IMR-90 (cell line): ENCODE measurements at regions of chr9 and their contacts with region 1.

Region 1: DNA sequence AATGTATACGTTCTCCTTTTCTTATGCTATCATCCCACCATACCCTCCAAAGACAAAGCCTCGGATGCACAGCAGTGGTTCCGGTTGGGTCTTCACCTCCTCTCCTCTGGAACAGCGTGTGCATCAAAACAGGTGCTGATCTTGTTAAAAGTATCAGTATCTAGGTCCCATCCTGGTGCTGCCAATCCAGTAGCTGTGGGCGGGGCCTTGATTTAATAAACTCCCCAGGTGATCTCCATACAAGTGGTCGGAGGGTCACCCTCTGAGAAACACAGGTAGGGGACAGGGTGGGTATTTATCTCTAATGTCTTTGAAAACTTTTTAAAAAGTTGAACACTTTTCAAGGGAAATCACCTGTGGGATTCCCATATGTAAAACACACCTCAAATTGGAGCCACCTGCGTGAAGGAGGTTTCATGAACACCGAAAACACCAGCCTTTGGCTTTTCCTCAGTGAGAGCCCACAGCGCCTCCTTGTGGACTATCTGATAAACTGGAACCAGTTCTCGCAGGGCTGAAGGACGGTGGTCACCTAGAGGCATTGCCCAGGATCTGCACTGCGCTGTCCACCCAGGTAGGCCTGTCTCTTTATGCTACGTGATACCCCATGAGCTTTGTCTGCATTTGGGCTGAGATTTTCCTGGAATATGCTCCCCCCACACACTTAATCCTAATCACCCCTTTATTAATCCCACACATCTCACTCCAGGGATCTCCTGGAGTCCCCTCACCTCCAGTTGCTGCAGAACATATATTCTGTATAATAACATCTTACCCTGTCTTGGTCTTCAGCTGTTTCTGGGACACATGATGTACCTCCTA is 80.5 kb upstream of the EPB41L4B start:
- DNase-seq: peak; percentile 35
- ATAC-seq: peak; percentile 72
- H3K4me3 ChIP-seq: no peak overlapping the region
- H3K27ac ChIP-seq: no peak overlapping the region
- H3K4me1 ChIP-seq: no peaks in the 10 kb centered on the region
- H3K27me3 ChIP-seq: no peaks in the 10 kb centered on the region; the same call in 1 of the 2 replicates
- CTCF ChIP-seq: peak; percentile 58
- POLR2A ChIP-seq: no peak
- RAD21 ChIP-seq: peak; percentile 62

Region 2: GRCh38 chr9:109182940-109183798 is 218.2 kb before region 1 on chr9:
- CTCF ChIA-PET with region 1: no interaction called
- POLR2A ChIA-PET with region 1: no interaction called
- dilution Hi-C with region 1: no loop called
- in situ Hi-C with region 1: no loop called
- intact Hi-C with region 1: loop called (anchors 5 kb)
- DNase-seq: peak; percentile 15
- ATAC-seq: peak; percentile 61
- H3K4me3 ChIP-seq: no peak overlapping the region
- H3K27ac ChIP-seq: no peak overlapping the region
- H3K4me1 ChIP-seq: no peaks in the 10 kb centered on the region
- H3K27me3 ChIP-seq: peaks cover 16% of the 10 kb centered on the region
- CTCF ChIP-seq: peak; percentile 40
- POLR2A ChIP-seq: no peak
- RAD21 ChIP-seq: peak; percentile 31; the same call in 1 of the 2 replicates

Region 3: DNA sequence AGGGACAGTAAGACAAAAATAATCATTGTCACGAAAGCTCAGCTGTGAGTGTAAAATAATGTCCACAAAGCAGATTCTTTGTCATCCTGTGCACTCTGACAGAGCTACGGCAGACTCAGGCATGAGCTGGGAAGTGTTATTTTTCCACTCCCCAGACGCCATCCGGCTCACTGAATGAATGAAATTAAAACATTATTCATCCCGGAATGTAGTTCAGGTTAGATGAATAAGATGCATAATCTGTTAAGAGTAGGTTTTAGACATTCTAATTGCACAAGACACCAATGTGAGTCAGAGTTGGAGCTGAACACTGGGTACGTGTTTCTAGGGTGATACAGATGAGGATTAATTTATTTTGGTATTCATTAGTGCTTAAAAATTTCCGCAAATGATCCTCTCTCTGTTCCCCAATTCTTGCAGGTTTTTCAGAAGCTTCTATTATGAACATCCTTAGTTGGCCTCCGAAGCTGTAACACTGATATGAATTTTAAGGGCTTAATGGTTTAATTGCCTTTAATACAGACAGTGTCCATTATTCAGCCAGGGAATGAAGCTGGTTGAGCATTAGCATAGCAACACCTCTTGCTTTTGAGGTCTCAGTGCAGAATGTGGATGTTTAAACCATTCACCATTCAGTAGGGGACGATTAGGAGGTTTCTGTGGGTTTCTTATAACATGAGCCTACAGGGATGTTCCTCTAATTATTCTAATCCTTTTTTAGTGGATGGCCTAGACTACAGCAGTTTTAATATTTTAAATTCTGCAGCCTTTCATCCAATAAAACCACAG is 168.7 kb before region 1 on chr9:
- CTCF ChIA-PET with region 1: no interaction called
- POLR2A ChIA-PET with region 1: no interaction called
- dilution Hi-C with region 1: no loop called
- in situ Hi-C with region 1: no loop called
- intact Hi-C with region 1: no loop called
- DNase-seq: peak; percentile 61
- ATAC-seq: peak; percentile 83
- H3K4me3 ChIP-seq: no peak overlapping the region
- H3K27ac ChIP-seq: no peak overlapping the region
- H3K4me1 ChIP-seq: no peaks in the 10 kb centered on the region
- H3K27me3 ChIP-seq: peaks cover 23% of the 10 kb centered on the region
- CTCF ChIP-seq: no peak
- POLR2A ChIP-seq: no peak
- RAD21 ChIP-seq: no peak

Region 4: GRCh38 chr9:109244157-109245132 is 156.9 kb before region 1 on chr9:
- CTCF ChIA-PET with region 1: no interaction called
- POLR2A ChIA-PET with region 1: no interaction called
- dilution Hi-C with region 1: no loop called
- in situ Hi-C with region 1: no loop called
- intact Hi-C with region 1: loop called (anchors 1 kb)
- DNase-seq: peak; percentile 65
- ATAC-seq: peak; percentile 95
- H3K4me3 ChIP-seq: no peak overlapping the region
- H3K27ac ChIP-seq: no peak overlapping the region
- H3K4me1 ChIP-seq: peaks cover 3% of the 10 kb centered on the region
- H3K27me3 ChIP-seq: peaks cover 3% of the 10 kb centered on the region
- CTCF ChIP-seq: peak; percentile 73
- POLR2A ChIP-seq: no peak
- RAD21 ChIP-seq: peak; percentile 65

Region 5: GRCh38 chr9:109328978-109329637 is 72.3 kb before region 1 on chr9:
- CTCF ChIA-PET with region 1: no interaction called
- POLR2A ChIA-PET with region 1: no interaction called
- dilution Hi-C with region 1: no loop called
- in situ Hi-C with region 1: no loop called
- intact Hi-C with region 1: loop called (anchors 5 kb)
- DNase-seq: peak; percentile 58
- ATAC-seq: peak; percentile 86
- H3K4me3 ChIP-seq: no peak overlapping the region
- H3K27ac ChIP-seq: no peak overlapping the region
- H3K4me1 ChIP-seq: peaks cover 4% of the 10 kb centered on the region; the same call in 1 of the 2 replicates
- H3K27me3 ChIP-seq: no peaks in the 10 kb centered on the region; the same call in 1 of the 2 replicates
- CTCF ChIP-seq: no peak
- POLR2A ChIP-seq: no peak
- RAD21 ChIP-seq: no peak